MCF 10A (cell line): ENCODE measurements at regions of chr16 and their contacts with region 1.

Region 1: DNA sequence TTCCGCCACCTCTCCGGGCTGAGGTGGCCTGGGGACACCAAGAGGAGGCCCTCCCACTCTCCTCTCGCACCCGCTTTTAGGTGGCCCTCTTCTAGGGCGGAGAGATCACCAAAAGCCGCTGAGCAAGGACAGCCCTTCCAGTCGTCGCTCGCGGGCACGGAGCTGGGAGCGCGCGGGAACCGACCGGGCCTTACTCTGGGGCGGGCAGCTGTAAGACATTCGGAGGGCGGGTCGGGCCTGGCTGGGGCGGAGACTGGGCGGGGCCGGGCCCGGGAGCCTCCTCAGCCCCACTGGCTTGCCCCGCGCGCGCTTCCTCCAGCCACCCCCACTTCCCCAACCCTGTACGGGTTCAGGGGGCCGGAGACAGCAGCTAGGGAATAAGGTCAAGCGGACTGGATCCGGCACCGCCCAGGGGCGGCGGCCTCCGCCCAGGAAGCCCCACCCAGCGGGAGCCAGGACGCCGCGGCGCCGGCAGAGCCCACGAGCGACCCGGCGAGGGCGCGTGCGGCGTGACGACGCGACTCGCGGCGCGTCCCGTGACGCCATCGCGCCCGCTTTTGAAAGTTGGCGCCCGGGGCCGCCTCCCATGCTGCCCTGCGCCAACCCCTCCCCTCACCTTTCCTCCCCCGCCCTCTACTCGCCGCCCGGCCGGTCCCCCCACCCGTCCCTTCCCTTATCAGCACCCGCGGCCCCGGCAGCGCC is 351 bp upstream of the CTCF start:
- DNase-seq: peak; percentile 96
- H3K4me3 Mint-ChIP-seq: peak overlapping the region; percentile 88
- H3K27ac Mint-ChIP-seq: peak overlapping the region; percentile 81
- H3K4me1 Mint-ChIP-seq: peaks cover 7% of the 10 kb centered on the region
- H3K27me3 Mint-ChIP-seq: no peaks in the 10 kb centered on the region
- CTCF ChIP-seq: no peak

Region 2: GRCh38 chr16:67326472-67327309 is 235.3 kb before region 1 on chr16 and contains the starts of genes KCTD19 and LRRC36:
- CTCF ChIA-PET with region 1: no interaction called
- POLR2A ChIA-PET with region 1: no interaction called
- intact Hi-C with region 1: no loop called
- DNase-seq: no peak
- H3K4me3 Mint-ChIP-seq: no peak within 1 kb of the TSS
- H3K27ac Mint-ChIP-seq: no peak within 1 kb of the TSS
- H3K4me1 Mint-ChIP-seq: no peaks in the 10 kb centered on the region
- H3K27me3 Mint-ChIP-seq: peaks cover 47% of the 10 kb centered on the region
- CTCF ChIP-seq: no peak
- total RNA-seq, gene KCTD19: not detected in 2 replicates
- total RNA-seq, gene LRRC36: not detected in 2 replicates

Region 3: DNA sequence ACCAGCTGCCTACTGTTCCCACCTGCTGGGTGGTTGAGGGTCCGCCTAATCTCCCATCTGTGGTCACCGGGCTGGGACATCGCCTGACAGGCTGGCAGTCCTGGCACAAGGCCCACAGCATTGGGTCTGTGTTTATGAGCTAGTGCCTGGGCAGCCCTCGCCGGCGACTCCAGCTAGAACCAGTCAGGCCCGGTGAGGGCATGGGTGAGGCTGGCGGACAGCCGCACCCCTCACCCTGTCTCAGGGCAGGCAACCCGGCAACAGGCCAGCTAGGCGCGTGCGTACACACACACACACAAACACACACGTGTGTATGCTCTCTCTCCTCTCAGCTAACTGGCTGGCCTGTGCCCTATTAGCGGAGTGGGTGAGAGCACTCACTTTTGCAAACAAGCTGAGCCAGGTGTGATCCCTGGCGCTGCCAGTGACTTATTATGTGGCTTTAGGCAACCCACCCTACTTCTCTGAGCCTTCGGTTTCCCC is 120.7 kb before region 1 on chr16:
- CTCF ChIA-PET with region 1: no interaction called
- POLR2A ChIA-PET with region 1: no interaction called
- intact Hi-C with region 1: no loop called
- DNase-seq: peak; percentile 58
- H3K4me3 Mint-ChIP-seq: no peak overlapping the region
- H3K27ac Mint-ChIP-seq: peak overlapping the region; percentile 40
- H3K4me1 Mint-ChIP-seq: peaks cover 20% of the 10 kb centered on the region
- H3K27me3 Mint-ChIP-seq: no peaks in the 10 kb centered on the region
- CTCF ChIP-seq: no peak

Region 4: DNA sequence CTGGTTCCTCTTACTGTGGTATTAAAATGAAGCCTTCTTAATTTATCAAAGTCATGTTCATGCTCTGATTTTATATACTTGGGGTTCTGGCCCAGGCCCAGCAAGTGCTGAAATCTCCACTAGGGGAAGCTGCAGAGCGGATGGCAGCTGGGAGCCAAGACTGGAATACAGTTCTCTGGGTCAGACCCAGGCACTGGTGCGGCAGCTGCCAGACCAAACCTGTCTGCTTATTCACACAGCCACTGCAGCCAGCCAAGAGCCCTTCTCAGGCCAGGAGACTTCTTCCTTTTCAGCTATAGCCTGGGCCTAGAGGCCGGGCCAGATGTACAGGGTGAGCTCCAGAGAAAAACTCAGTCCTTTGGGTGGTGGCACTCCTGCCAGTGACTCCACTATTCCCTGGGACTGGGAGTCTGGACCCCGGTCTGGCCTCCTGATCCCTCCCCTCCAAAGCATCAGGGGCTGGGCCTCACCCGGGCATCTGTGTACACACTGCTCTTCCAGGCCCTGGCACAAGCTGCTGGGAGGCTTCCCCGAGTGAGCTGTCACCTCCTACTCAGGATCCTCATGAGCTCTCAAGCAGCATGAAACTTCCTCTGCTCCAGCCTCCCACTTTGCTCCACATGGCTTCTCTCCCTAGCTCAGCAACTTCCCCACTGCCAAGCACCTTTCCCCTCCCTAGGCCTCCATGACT is 105.4 kb before region 1 on chr16:
- CTCF ChIA-PET with region 1: no interaction called
- POLR2A ChIA-PET with region 1: no interaction called
- intact Hi-C with region 1: no loop called
- DNase-seq: peak; percentile 25
- H3K4me3 Mint-ChIP-seq: no peak overlapping the region
- H3K27ac Mint-ChIP-seq: no peak overlapping the region
- H3K4me1 Mint-ChIP-seq: peaks cover 12% of the 10 kb centered on the region
- H3K27me3 Mint-ChIP-seq: no peaks in the 10 kb centered on the region
- CTCF ChIP-seq: peak; percentile 32

Region 5: GRCh38 chr16:67546761-67547422 is 15.1 kb before region 1 on chr16:
- CTCF ChIA-PET with region 1: interaction called, 50 read pairs
- POLR2A ChIA-PET with region 1: interaction called, 15 read pairs
- intact Hi-C with region 1: loop called (anchors 1 kb)
- DNase-seq: peak; percentile 75
- H3K4me3 Mint-ChIP-seq: no peak overlapping the region
- H3K27ac Mint-ChIP-seq: peak overlapping the region; percentile 86
- H3K4me1 Mint-ChIP-seq: peaks cover 38% of the 10 kb centered on the region
- H3K27me3 Mint-ChIP-seq: no peaks in the 10 kb centered on the region
- CTCF ChIP-seq: peak; percentile 89

Region 6: GRCh38 chr16:67595033-67595355 is 33.0 kb after region 1 on chr16:
- CTCF ChIA-PET with region 1: interaction called, 10 read pairs
- POLR2A ChIA-PET with region 1: interaction called, 10 read pairs
- intact Hi-C with region 1: no loop called
- DNase-seq: peak; percentile 72
- H3K4me3 Mint-ChIP-seq: no peak overlapping the region
- H3K27ac Mint-ChIP-seq: peak overlapping the region; percentile 51
- H3K4me1 Mint-ChIP-seq: peaks cover 28% of the 10 kb centered on the region
- H3K27me3 Mint-ChIP-seq: no peaks in the 10 kb centered on the region
- CTCF ChIP-seq: no peak

Region 7: DNA sequence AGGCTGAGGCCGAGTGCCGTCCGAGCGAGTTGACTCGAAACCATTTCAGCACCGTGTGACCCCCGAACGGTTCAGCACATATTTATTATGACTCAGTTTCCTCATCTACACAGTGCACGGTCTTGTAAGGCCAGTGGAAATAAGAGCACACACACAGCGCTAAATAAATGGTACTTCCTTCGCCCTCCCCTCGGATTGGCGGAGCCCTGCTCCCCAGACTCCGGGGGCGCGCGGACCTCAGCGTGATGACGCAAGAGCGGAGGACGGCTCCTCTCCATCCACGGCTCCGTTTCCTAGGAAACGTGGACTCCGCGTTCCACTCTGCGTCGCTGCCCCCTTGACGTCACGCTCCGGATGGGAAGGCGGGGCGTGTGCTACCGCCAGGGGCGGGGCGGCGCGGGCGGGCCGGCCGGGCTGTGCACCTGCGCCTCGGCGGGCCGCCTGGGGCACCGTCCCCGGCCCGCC is 98.6 kb after region 1 on chr16 and contains the start of gene PARD6A:
- CTCF ChIA-PET with region 1: interaction called, 12 read pairs
- POLR2A ChIA-PET with region 1: interaction called, 23 read pairs
- intact Hi-C with region 1: no loop called
- DNase-seq: peak; percentile 94
- H3K4me3 Mint-ChIP-seq: peak within 1 kb of the TSS; percentile 86
- H3K27ac Mint-ChIP-seq: peak within 1 kb of the TSS; percentile 97
- H3K4me1 Mint-ChIP-seq: peaks cover 6% of the 10 kb centered on the region
- H3K27me3 Mint-ChIP-seq: no peaks in the 10 kb centered on the region
- CTCF ChIP-seq: no peak
- total RNA-seq, gene PARD6A: 3.2 and 4.5 TPM in 2 replicates

Region 8: GRCh38 chr16:67806428-67807147 is 244.6 kb after region 1 on chr16 and contains the starts of genes RANBP10 and TSNAXIP1:
- CTCF ChIA-PET with region 1: interaction called, 3 read pairs
- POLR2A ChIA-PET with region 1: interaction called, 11 read pairs
- intact Hi-C with region 1: no loop called
- DNase-seq: peak; percentile 99
- H3K4me3 Mint-ChIP-seq: peak within 1 kb of the TSS; percentile 90
- H3K27ac Mint-ChIP-seq: peak within 1 kb of the TSS; percentile 89
- H3K4me1 Mint-ChIP-seq: peaks cover 5% of the 10 kb centered on the region
- H3K27me3 Mint-ChIP-seq: no peaks in the 10 kb centered on the region
- CTCF ChIP-seq: no peak
- total RNA-seq, gene RANBP10: 17.2 and 21.7 TPM in 2 replicates
- total RNA-seq, gene TSNAXIP1: 1.1 and 1.5 TPM in 2 replicates